Activated naive CD4-positive, alpha-beta T cell treated with anti-CD3 and anti-CD28 coated beads for 36 hours (primary cell): ENCODE measurements at regions of chr7 and their contacts with region 1.

Region 1: GRCh38 chr7:90424720-90425119 is 21.5 kb downstream of the CLDN12 start:
- DNase-seq: peak; percentile 11
- H3K4me3 Mint-ChIP-seq: peak overlapping the region; percentile 16
- H3K27ac Mint-ChIP-seq: peak overlapping the region; percentile 79
- H3K4me1 Mint-ChIP-seq: peaks cover 16% of the 10 kb centered on the region
- H3K27me3 Mint-ChIP-seq: peaks cover 2% of the 10 kb centered on the region

Region 2: GRCh38 chr7:90155206-90155605 is 269.5 kb before region 1 on chr7:
- CTCF ChIA-PET with region 1: interaction called, 31 read pairs
- intact Hi-C with region 1: loop called (anchors 1 kb)
- DNase-seq: no peak
- H3K4me3 Mint-ChIP-seq: no peak overlapping the region
- H3K27ac Mint-ChIP-seq: no peak overlapping the region
- H3K4me1 Mint-ChIP-seq: peaks cover 3% of the 10 kb centered on the region
- H3K27me3 Mint-ChIP-seq: peaks cover 23% of the 10 kb centered on the region

Region 3: GRCh38 chr7:90244909-90245851 is 179.5 kb before region 1 on chr7 and contains the start of gene CFAP69:
- CTCF ChIA-PET with region 1: interaction called, 5 read pairs
- intact Hi-C with region 1: loop called (anchors 1 kb)
- DNase-seq: peak; percentile 91
- H3K4me3 Mint-ChIP-seq: peak within 1 kb of the TSS; percentile 97
- H3K27ac Mint-ChIP-seq: no peak within 1 kb of the TSS
- H3K4me1 Mint-ChIP-seq: peaks cover 17% of the 10 kb centered on the region
- H3K27me3 Mint-ChIP-seq: peaks cover 24% of the 10 kb centered on the region
- total RNA-seq, gene CFAP69: 0.25 to 0.31 TPM

Region 4: DNA sequence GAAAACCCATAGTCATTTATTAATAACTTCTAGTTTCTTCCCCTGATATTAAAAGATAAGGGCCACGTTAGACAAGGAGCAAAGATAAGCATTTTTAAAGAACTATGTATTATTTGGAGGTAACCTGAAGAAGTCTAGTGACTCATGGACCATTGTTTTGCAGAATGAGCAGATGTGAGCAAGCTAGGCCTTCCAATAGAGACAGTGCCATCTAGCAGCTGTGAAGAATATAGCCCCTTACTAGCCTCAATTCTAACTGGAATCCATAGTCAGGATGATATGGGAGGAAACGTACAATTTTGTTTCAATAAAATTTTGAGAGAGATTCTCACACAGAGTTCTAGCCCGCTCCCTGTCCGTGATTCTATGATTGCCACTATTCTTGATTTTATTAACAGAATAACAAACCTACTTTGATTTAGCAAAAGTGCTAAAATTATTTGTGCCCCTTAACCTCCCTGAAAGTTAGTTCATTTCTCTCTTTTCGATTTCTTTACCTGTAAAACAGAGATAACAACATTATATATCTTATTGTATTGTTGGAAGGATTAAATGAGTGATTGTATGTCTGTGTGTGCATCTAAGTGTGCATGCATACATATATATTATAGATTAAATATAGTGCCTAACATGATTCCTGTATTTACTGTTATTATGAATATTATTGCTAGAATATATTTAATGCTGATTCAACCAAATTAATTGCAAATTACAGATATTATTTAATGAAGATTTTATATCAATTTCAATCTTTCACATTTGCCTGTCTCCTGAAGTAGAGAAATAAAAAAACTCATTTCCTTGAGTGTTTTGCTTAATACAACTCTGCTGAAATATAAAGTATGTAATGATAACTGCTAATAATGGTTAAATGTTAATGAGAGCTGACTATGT is 126.3 kb before region 1 on chr7:
- CTCF ChIA-PET with region 1: interaction called, 4 read pairs
- intact Hi-C with region 1: loop called (anchors 1 kb)
- DNase-seq: no peak
- H3K4me3 Mint-ChIP-seq: no peak overlapping the region
- H3K27ac Mint-ChIP-seq: no peak overlapping the region
- H3K4me1 Mint-ChIP-seq: no peaks in the 10 kb centered on the region
- H3K27me3 Mint-ChIP-seq: peaks cover 2% of the 10 kb centered on the region

Region 5: GRCh38 chr7:90346336-90347125 is 78.2 kb before region 1 on chr7 and contains the start of gene GTPBP10:
- CTCF ChIA-PET with region 1: interaction called, 15 read pairs
- intact Hi-C with region 1: loop called (anchors 1 kb)
- DNase-seq: peak; percentile 96
- H3K4me3 Mint-ChIP-seq: peak within 1 kb of the TSS; percentile 94
- H3K27ac Mint-ChIP-seq: peak within 1 kb of the TSS; percentile 96
- H3K4me1 Mint-ChIP-seq: peaks cover 34% of the 10 kb centered on the region
- H3K27me3 Mint-ChIP-seq: no peaks in the 10 kb centered on the region
- total RNA-seq, gene GTPBP10: 35.8 to 39.3 TPM

Region 6: DNA sequence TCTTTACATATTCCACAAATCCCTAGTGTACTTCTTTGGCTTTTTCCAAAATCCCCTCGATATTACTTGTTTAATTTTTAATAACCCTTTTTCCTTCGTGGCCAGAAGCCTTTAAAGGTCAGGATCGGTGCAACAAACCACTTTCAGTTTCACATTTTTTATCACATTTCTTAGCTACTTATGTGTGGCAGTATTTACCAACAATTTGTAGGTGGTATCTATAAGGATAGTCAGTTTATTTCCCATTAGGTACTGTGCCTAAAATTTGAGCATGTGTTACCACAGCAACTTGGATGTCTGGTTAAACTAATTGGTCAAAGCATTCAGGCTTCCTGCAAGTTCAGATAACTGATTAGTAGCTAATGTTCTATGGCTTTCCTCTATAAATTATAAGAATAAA is 276.3 kb after region 1 on chr7:
- CTCF ChIA-PET with region 1: no interaction called
- intact Hi-C with region 1: no loop called
- DNase-seq: no peak
- H3K4me3 Mint-ChIP-seq: no peak overlapping the region
- H3K27ac Mint-ChIP-seq: no peak overlapping the region
- H3K4me1 Mint-ChIP-seq: peaks cover 2% of the 10 kb centered on the region
- H3K27me3 Mint-ChIP-seq: peaks cover 7% of the 10 kb centered on the region

Region 7: GRCh38 chr7:90816511-90817142 is 391.9 kb after region 1 on chr7:
- CTCF ChIA-PET with region 1: no interaction called
- intact Hi-C with region 1: no loop called
- DNase-seq: no peak
- H3K4me3 Mint-ChIP-seq: no peak overlapping the region
- H3K27ac Mint-ChIP-seq: no peak overlapping the region
- H3K4me1 Mint-ChIP-seq: peaks cover 3% of the 10 kb centered on the region
- H3K27me3 Mint-ChIP-seq: no peaks in the 10 kb centered on the region